IMR-90 (cell line): ENCODE measurements at regions of chr2 and their contacts with region 1.

Region 1: GRCh38 chr2:85369500-85369899 is 14.9 kb downstream of the ELMOD3 start:
- DNase-seq: no peak
- ATAC-seq: peak; percentile 72
- H3K4me3 ChIP-seq: no peak overlapping the region
- H3K27ac ChIP-seq: no peak overlapping the region
- H3K4me1 ChIP-seq: peaks cover 3% of the 10 kb centered on the region; the same call in 1 of the 2 replicates
- H3K27me3 ChIP-seq: no peaks in the 10 kb centered on the region
- CTCF ChIP-seq: no peak
- POLR2A ChIP-seq: no peak
- RAD21 ChIP-seq: no peak

Region 2: GRCh38 chr2:85999061-85999831 is 629.7 kb after region 1 on chr2:
- CTCF ChIA-PET with region 1: no interaction called
- POLR2A ChIA-PET with region 1: interaction called, 12 read pairs
- dilution Hi-C with region 1: no loop called
- in situ Hi-C with region 1: no loop called
- intact Hi-C with region 1: no loop called
- DNase-seq: peak; percentile 49
- ATAC-seq: peak; percentile 9
- H3K4me3 ChIP-seq: no peak overlapping the region
- H3K27ac ChIP-seq: peak overlapping the region; percentile 92
- H3K4me1 ChIP-seq: peaks cover 32% of the 10 kb centered on the region
- H3K27me3 ChIP-seq: no peaks in the 10 kb centered on the region
- CTCF ChIP-seq: no peak
- POLR2A ChIP-seq: no peak
- RAD21 ChIP-seq: no peak